IMR-90 (cell line): ENCODE measurements at regions of chr4 and their contacts with region 1.

Region 1: DNA sequence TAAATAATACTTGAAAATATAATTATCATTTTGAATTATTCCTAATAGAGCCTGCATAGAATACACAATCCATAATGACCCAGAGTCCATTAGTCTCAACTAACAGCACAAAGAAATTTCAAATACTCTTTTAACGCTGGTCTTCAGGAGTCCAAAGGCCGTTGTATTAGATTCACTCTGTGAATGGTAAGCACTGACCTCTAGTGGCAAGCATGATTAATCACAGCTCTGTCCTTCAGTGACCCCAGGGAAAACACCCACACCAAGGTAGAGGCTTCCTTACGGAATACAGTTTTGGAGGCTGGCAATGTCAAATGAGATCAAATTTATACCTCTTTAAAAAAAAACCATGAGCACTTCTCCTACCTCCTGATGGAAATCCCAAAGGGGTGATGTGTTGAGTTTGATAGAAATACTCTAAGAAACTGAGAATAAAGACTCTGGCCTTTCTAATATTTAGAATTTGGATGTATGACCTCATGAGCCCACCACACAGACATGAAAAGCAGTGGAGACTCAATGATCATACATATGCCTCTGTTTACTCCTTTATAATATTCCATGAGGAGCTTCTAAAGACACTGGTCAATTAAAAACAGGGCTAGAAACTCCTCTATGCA is 147.2 kb upstream of the DKK2 start:
- DNase-seq: peak; percentile 58
- ATAC-seq: peak; percentile 98
- H3K4me3 ChIP-seq: no peak overlapping the region
- H3K27ac ChIP-seq: no peak overlapping the region
- H3K4me1 ChIP-seq: no peaks in the 10 kb centered on the region
- H3K27me3 ChIP-seq: 0 out of 2 replicates have a peak, but pooled peaks cover 1% of the 10 kb centered on the region
- CTCF ChIP-seq: peak; percentile 76
- POLR2A ChIP-seq: no peak
- RAD21 ChIP-seq: peak; percentile 63

Region 2: DNA sequence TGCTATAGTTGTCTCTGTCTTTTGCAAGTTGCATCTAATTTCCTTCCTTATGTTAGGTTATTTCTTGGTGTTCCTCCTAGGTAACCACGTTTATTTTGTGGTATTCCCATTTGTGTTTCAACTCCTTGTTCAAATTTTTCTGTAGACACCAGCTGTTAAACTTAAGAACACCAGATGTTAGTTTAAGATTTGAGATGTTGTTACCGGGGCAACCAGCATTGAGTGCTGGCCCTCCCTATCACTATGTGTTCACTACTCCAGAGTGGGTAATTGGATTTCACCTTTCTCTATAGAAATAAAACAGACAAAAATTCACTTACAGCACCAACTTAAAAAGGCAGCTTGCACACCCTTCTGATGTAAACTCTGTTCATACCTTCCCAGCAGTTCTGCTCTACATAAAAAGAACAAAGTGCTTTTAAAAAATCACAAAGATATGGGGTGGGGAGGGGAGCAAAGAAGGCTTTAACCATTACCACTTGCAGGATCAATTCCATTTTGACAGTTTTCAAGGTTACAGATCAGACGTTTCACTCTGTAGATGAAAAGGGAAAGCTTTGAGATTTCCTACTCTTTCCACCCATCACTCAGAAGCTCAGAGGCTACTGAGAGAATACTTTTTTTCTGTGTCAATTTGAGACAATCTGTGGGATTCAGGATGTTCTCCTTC is 230.1 kb before region 1 on chr4:
- CTCF ChIA-PET with region 1: no interaction called
- POLR2A ChIA-PET with region 1: no interaction called
- dilution Hi-C with region 1: no loop called
- in situ Hi-C with region 1: no loop called
- intact Hi-C with region 1: no loop called
- DNase-seq: no peak
- ATAC-seq: no peak
- H3K4me3 ChIP-seq: no peak overlapping the region
- H3K27ac ChIP-seq: no peak overlapping the region
- H3K4me1 ChIP-seq: no peaks in the 10 kb centered on the region
- H3K27me3 ChIP-seq: no peaks in the 10 kb centered on the region
- CTCF ChIP-seq: no peak
- POLR2A ChIP-seq: no peak
- RAD21 ChIP-seq: no peak

Region 3: GRCh38 chr4:107037199-107037584 is 146.1 kb before region 1 on chr4:
- CTCF ChIA-PET with region 1: no interaction called
- POLR2A ChIA-PET with region 1: no interaction called
- dilution Hi-C with region 1: no loop called
- in situ Hi-C with region 1: no loop called
- intact Hi-C with region 1: loop called (anchors 5 kb)
- DNase-seq: peak; percentile 2
- ATAC-seq: peak; percentile 52
- H3K4me3 ChIP-seq: no peak overlapping the region
- H3K27ac ChIP-seq: no peak overlapping the region
- H3K4me1 ChIP-seq: no peaks in the 10 kb centered on the region
- H3K27me3 ChIP-seq: peaks cover 37% of the 10 kb centered on the region
- CTCF ChIP-seq: peak; percentile 44
- POLR2A ChIP-seq: no peak
- RAD21 ChIP-seq: peak; percentile 29

Region 4: GRCh38 chr4:107736924-107737448 is 553.7 kb after region 1 on chr4:
- CTCF ChIA-PET with region 1: no interaction called
- POLR2A ChIA-PET with region 1: no interaction called
- dilution Hi-C with region 1: no loop called
- in situ Hi-C with region 1: no loop called
- intact Hi-C with region 1: loop called (anchors 5 kb)
- DNase-seq: peak; percentile 57
- ATAC-seq: peak; percentile 73
- H3K4me3 ChIP-seq: no peak overlapping the region
- H3K27ac ChIP-seq: no peak overlapping the region
- H3K4me1 ChIP-seq: peaks cover 8% of the 10 kb centered on the region
- H3K27me3 ChIP-seq: peaks cover 4% of the 10 kb centered on the region; the same call in 1 of the 2 replicates
- CTCF ChIP-seq: peak; percentile 70
- POLR2A ChIP-seq: no peak
- RAD21 ChIP-seq: peak; percentile 83